RWPE1 (cell line): ENCODE measurements at regions of chr21 and their contacts with region 1.

Region 1: DNA sequence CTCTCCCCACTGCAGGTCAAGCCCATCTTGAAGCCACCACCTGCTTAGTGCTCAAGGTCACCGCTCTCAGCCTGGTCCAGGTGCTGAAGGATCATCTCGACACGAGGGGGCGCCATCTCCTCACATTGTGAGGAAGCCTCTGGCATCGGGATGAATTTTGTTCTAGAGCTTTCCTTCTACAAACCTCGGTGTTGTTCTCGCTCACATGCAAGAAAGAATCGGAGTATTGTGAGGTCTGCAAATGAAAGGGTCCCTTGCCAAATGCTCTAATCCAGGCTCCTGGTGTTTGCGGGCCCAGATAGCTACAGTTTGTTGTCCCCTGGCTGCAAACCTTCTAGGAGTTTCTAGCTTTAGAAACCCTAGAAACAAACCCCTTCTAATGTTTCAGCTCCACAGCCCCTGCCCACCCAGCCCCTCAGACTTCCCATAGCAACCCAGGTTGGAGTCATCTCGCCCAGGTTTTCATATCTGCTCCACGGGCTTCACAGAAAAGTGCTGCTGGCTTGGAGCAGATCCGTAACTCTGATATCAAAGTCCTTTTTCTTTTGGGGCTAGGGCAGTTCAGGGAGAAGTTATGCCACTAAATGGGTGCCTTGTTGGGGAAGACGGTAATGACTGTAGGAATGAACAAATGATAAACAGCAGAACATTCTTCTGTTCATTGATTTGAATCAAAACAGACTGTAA is 8.6 kb upstream of the ATP5PO start:
- DNase-seq: peak; percentile 80
- H3K27ac ChIP-seq: no peak overlapping the region
- CTCF ChIP-seq: peak; percentile 90

Region 2: GRCh38 chr21:33688353-33688752 is 235.9 kb before region 1 on chr21:
- CTCF ChIA-PET with region 1: no interaction called
- POLR2A ChIA-PET with region 1: no interaction called
- DNase-seq: no peak
- H3K27ac ChIP-seq: no peak overlapping the region
- CTCF ChIP-seq: no peak

Region 3: GRCh38 chr21:33751120-33751519 is 173.1 kb before region 1 on chr21:
- CTCF ChIA-PET with region 1: no interaction called
- POLR2A ChIA-PET with region 1: no interaction called
- DNase-seq: no peak
- H3K27ac ChIP-seq: no peak overlapping the region
- CTCF ChIP-seq: no peak

Region 4: DNA sequence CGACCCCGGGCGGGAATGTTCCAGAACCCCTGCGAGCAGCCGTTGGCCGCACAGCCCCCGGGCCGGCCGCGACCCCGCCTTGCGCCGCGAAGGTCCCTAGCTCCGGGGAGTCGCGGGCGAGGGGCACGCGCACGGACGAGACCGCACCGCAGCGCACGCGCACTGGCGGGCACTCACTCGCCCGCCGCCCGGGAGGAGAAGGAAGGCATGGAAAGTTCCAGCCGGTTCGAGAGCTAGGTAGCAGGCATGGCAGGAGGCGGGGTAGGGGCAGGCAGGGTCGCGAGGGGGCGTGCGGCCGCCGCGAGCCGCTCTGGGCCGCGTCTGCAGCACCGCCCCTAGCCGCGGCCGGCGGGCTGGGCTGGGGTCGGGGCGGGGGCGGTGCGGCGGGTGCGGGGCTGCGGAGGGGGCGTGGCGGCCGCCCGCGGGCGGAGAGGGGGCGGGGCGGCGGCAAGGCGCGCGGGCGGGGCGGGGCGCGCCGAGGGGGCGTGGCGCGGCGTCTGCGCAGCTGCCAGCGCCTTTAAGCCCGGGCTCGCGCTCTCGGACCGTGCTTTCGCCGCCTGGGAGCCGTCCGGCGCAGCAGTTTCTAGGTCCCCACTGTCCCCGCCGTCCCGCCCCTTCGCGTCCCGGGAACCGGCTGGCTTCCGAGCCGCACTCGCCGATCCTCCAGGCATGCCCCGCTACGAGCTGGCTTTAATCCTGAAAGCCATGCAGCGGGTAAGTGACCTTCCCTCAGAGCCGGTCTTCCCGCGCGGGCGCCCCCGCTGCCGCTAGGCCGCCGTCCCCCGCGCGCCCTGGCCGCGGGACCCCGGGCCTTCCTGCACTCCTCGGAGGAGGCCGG is 149.0 kb after region 1 on chr21 and contains the starts of genes MRPS6 and SLC5A3:
- CTCF ChIA-PET with region 1: interaction called, 39 read pairs
- POLR2A ChIA-PET with region 1: no interaction called
- DNase-seq: peak; percentile 69
- H3K27ac ChIP-seq: peak within 1 kb of the TSS; percentile 82
- CTCF ChIP-seq: no peak

Region 5: DNA sequence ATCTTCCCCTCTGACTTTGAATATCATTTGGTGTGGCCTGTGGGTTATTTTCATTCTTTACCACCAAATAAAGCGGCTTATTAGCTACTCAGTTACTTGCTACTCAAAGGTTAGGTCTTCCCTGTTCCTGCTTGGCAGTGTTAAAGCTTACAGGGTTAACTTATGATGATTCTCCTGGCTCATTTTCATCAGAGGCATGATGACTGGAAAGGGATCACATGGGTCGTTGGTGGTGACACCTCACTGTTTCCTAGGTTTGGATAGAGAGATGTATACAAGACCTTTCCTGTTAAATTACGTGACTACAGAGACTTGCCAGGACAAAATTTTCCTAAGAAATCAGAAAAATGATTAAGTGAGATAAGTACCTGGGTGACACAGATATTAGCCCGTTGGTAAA is 176.6 kb after region 1 on chr21:
- CTCF ChIA-PET with region 1: no interaction called
- POLR2A ChIA-PET with region 1: no interaction called
- DNase-seq: no peak
- H3K27ac ChIP-seq: no peak overlapping the region
- CTCF ChIP-seq: no peak

Region 6: DNA sequence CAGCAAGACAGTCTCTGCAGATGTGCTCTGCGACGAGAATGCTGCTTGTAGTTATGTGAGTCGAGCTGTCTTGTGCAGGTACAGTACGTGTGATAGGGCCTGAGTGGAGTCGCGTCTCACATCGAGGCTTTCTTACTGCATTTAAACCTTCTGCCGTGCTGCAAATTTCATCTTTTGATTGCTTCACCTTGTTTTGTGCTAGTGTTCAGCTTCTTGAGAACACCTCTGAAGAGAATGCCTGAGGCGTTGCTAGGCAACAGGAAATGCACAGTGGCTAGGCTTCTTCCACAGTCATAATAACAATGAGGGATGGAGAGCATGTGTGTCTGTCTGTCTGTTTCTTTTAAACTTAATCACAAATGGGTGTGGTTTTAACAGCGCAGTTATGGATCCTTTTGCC is 202.0 kb after region 1 on chr21:
- CTCF ChIA-PET with region 1: interaction called, 8 read pairs
- POLR2A ChIA-PET with region 1: interaction called, 13 read pairs
- DNase-seq: peak; percentile 54
- H3K27ac ChIP-seq: peak overlapping the region; percentile 84
- CTCF ChIP-seq: no peak

Region 7: DNA sequence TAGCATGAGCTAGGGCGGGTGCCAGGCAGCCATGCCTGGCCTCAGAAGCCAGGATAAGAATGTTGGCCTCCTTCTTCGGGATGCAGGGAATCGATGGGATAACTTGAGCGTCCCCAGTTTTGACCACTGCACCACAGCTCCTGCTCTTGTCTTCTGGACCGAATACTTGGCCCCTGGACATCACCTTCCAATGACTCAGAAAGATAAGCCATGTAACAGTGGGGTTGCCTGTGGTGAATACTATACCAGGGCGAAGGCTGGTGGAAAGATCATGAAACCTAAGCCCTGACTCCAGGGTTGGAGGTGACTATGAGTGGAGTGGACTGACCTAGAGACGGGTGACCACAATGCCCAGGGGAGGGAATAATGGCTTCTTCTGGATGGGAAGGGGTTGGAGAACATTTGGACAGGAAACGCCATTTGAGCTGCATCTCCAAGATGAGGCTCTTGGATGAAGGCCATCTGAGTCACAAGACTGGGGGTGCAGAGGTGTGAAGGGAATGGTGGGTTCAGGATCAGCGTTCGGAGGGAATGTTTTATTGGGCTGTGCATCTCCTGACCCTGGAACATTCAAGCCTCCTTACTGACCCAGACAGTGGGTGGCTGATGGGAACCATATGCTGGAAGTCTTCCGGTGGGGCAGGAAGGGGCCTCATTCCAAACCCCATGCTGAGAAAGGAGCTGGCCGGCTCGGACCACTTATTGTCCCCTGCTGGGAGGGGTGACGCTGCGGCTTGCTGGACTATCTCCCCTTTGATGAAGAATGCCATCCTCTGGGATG is 421.1 kb after region 1 on chr21:
- CTCF ChIA-PET with region 1: interaction called, 56 read pairs
- POLR2A ChIA-PET with region 1: no interaction called
- DNase-seq: no peak
- H3K27ac ChIP-seq: no peak overlapping the region
- CTCF ChIP-seq: no peak

Region 8: DNA sequence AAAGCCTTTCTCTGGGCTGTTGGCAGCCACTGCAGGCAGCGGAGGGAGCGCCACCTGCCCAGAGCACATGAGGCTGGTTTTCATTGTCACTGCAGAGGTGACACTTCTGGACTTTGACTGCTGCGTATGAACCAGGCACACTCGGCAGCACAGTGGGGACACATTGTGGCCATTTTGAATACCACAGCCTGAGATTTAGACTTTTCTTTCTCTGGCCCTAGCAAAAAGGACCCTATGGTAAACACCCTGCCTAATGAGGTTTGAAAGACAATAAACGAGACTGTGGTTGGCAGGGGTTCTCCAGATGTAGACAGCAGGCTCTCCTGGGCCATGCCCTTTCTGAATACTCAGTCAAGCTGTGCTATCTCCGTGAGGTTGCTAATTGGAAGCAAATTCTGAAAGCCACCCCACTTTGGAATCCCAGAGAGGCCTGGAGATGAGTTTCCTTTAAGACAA is 427.6 kb after region 1 on chr21:
- CTCF ChIA-PET with region 1: interaction called, 56 read pairs
- POLR2A ChIA-PET with region 1: no interaction called
- DNase-seq: no peak
- H3K27ac ChIP-seq: no peak overlapping the region
- CTCF ChIP-seq: peak; percentile 35